Activated T-helper 1 cell treated with anti-CD3 and anti-CD28 coated beads, Interleukin-12 subunit alpha, Interleukin-12 subunit beta, Interleukin-2, Interleukin-4 antibody, amounts not matched to agents 30 ng/mL and 10 ng/mL and 1 ng/mL, durations not matched to agents 14 hours and 24 hours and 36 hours (primary cell): ENCODE measurements at regions of chr12 and their contacts with region 1.

Region 1: DNA sequence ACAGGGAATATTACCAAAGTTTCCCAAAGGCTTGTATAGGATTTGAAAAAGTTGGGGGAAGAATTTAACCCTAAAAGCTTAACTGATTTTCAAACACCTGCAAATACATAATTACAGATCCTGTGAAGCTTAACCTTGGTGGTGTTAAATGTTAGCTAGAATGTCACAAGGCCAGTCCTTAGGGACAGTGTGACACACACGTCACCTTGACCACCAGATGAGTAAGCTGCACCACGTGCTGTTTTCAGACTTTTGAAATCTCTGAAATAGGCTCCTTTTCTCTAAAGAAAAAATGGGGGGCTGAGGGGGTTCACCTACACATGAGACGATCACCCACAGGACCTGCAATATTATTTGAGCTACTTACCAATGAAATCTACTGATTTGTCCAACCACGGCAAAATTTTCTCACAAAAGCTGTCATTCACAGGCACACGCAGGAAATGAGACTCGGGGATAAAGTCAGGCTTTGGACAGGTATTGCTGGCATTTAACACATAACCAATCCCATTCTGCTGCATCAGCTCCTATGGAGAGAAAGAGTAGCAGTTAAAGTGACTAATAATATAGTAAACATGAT is 75.9 kb downstream of the DUSP16 start:
- DNase-seq: no peak
- H3K4me3 Mint-ChIP-seq: no peak overlapping the region
- H3K27ac Mint-ChIP-seq: peak overlapping the region; percentile 59
- H3K4me1 Mint-ChIP-seq: peaks cover 55% of the 10 kb centered on the region
- H3K27me3 Mint-ChIP-seq: no peaks in the 10 kb centered on the region

Region 2: DNA sequence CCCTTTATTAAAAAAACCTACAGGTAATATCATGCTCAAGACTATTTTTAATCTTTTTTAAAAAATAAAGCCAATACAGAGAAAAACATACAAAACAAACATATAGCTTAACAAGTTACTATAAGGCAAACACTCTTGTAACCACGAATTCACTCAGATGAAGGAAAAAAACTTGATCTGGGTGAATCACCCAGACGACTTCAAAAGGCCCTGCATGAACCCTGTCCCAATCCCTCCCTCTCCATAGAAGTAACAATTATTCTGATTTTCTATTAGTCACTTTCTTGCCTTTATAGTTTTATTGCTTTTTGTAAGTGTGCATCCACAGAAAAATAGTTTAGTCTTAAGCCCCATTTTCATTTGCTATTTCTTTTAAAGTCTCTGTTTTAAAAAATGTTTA is 292.5 kb before region 1 on chr12:
- intact Hi-C with region 1: no loop called
- DNase-seq: no peak
- H3K4me3 Mint-ChIP-seq: no peak overlapping the region
- H3K27ac Mint-ChIP-seq: no peak overlapping the region
- H3K4me1 Mint-ChIP-seq: no peaks in the 10 kb centered on the region
- H3K27me3 Mint-ChIP-seq: peaks cover 52% of the 10 kb centered on the region

Region 3: DNA sequence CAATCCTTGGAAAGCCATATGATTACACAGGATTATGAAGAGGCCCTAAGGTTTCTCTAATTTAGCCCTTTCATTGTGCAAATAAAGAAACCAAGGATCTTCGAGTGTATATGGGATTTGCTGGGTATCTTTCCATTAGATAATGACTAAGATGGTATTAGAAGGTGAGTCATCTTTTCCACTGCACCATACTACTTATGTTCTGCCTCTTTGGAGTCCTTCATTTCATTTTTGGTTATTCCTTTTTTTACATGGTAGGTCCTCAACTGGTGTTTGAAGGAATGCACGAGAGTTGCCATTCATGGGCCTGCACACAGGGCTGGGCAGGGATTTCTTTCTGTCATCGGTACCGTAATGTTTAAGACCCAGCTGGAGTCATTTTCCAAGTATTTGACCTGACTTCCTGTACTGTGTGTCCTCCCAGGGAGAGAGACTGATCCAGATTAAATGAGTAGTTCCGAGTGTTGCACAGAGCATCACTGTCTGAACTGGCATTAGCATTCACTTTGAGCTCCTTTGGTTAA is 44.1 kb before region 1 on chr12:
- intact Hi-C with region 1: loop called (anchors 1 kb)
- DNase-seq: no peak
- H3K4me3 Mint-ChIP-seq: peak overlapping the region; percentile 34
- H3K27ac Mint-ChIP-seq: peak overlapping the region; percentile 95
- H3K4me1 Mint-ChIP-seq: peaks cover 74% of the 10 kb centered on the region
- H3K27me3 Mint-ChIP-seq: no peaks in the 10 kb centered on the region